Tibial artery (tissue), 4 donors: ENCODE measurements at regions of chr1 and their contacts with region 1.

Region 1: GRCh38 chr1:247331172-247331991 is at the start of gene ZNF496:
- DNase-seq: peak; percentile 87 to 90
- H3K4me3 ChIP-seq: peak within 1 kb of the TSS; percentile 74 to 90
- H3K27ac ChIP-seq: peak within 1 kb of the TSS; percentile 91 to 93
- H3K4me1 ChIP-seq: peaks cover 0 to 25% (median 16%) of the 10 kb centered on the region in 4 donors
- H3K27me3 ChIP-seq: no peaks in the 10 kb centered on the region
- CTCF ChIP-seq: no peak

Region 2: DNA sequence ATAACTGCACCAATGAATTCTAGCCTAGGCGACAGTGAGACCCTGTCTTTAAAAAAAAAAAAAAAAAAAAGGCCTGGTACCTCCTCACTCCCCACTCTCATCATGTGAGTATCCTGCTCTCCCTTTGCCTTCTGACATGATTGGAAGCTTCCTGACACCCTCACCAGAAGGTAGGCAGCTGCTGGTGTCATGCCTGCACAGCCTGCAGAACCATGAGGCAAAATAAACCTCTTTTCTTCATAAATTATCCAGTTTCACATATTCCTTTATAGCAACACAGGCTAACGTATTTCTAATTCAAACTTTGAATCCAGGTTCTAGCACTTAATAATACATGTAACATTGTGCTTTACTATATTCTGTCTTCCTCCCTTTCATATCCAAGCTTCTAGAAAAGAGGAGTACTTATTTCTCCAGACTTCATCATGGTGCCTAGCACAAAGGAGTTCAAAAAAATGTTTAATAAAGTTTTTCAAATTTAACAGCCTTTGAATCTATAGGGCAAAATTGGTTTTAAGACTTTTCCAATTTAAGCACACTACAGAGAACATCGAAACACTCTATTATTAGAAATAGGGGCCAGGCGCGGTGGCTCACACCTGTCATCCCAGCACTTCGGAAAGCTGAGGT is 405.3 kb before region 1 on chr1:
- intact Hi-C with region 1: loop called (anchors 5 kb)
- DNase-seq: no peak
- H3K4me3 ChIP-seq: no peak overlapping the region
- H3K27ac ChIP-seq: no peak overlapping the region
- H3K4me1 ChIP-seq: peaks cover 0 to 82% (median 30%) of the 10 kb centered on the region in 4 donors
- H3K27me3 ChIP-seq: no peaks in the 10 kb centered on the region
- CTCF ChIP-seq: no peak

Region 3: GRCh38 chr1:247172996-247173395 is 158.4 kb before region 1 on chr1:
- intact Hi-C with region 1: no loop called
- DNase-seq: no peak
- H3K4me3 ChIP-seq: no peak overlapping the region
- H3K27ac ChIP-seq: no peak overlapping the region
- H3K4me1 ChIP-seq: no peaks in the 10 kb centered on the region
- H3K27me3 ChIP-seq: no peaks in the 10 kb centered on the region
- CTCF ChIP-seq: no peak

Region 4: DNA sequence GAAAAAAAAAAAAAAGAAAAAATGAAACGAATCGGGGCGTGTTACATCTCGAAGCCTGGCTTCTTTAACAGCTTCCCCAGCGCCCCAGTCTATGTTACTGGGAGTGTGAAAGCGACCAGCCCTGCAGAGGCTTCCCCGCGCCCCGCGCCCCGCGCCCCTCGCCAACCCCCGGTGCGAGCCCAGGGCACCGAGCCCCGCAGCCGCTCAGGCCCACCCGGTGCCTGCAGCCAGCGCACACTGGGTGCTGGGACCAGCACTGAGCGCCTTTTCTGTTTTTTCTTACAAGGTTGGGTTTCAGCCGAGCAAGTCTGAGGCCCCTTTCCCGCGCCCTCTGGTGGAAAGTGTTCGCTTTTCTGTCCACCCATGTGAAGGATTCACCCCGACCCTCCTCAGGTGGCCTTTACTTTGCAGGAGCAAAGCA is 42.3 kb after region 1 on chr1:
- intact Hi-C with region 1: loop called (anchors 5 kb)
- DNase-seq: peak in 1 of 2 donors; percentile 47
- H3K4me3 ChIP-seq: peak overlapping the region in 1 of 2 donors; percentile 53
- H3K27ac ChIP-seq: no peak overlapping the region
- H3K4me1 ChIP-seq: peaks cover 0 to 4% (median 2%) of the 10 kb centered on the region in 4 donors
- H3K27me3 ChIP-seq: no peaks in the 10 kb centered on the region
- CTCF ChIP-seq: peak; percentile 37 to 46